HEK293T (cell line): ENCODE measurements at regions of chr2 and their contacts with region 1.

Region 1: DNA sequence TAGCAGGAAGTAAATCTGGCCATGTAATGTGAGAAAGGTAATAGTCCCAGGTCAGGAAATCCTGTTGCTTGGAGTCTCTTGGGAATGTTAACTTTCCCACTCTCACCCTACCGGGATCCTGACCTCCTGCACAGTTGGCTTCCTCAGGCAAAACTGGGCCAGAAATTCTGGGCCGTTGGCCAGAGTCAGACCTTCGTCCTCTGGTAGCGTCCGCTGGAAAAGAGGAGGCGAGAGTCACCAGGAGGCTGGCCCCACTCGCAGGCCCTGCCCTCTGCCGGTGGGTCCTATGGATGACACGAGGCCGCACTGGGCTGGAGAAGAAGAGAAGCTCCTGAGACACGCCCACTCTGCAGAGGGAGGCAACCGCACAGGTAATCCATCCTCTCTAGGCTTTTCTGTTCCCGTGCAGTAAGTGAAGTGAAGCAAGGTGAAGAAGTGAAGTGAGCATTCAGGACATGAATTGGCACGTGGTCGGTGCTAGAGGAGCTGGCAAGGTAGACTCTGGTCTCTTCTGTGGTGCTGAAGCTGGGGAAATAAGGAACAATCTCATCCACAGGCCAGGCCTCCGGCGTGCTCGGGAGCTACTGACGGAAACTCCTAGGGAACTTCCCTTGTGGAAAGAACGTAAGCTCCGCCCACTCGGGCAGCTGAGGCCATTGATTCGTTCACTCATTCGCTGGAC is 182.7 kb upstream of the GLI2 start:
- DNase-seq: peak; percentile 87

Region 2: DNA sequence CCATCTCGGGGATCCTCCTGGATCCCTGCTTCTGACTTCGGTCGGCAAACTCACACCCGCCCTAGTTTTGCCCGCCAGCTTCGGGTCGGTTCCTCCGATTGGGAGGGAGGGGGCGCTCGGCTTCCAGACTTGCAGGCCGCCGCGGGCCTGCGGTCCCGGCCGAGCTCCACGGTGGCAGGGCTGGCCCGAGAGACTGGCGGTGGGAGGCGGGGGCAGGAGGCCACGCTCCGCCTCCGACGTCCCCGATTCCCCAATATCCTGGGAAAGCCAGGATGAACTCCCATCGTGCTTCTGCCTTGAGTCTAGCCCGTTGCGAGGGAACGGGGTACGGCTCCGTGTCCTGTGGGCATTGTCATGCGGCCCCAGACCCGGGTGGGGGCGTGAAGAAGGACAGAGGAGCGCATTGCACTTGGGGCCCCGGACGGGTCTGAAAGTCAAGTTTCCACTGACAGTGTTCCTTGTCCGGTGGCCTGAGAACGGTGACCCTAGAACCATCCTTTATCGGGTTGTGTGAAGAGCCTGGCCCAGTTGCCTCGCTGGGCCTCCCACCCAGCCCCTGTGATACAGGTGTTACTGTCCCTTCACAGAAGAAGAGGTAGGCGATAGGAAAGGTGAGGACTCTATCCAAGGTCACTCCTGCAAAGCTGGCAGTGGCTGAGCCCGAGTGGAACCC is 209.4 kb before region 1 on chr2:
- CTCF ChIA-PET with region 1: interaction called, 14 read pairs
- POLR2A ChIA-PET with region 1: no interaction called
- DNase-seq: peak; percentile 79